Mucosa of descending colon (tissue), 3 donors: ENCODE measurements at regions of chr1 and their contacts with region 1.

Region 1: GRCh38 chr1:226608699-226609505 is 60.3 kb downstream of the STUM start:
- DNase-seq: peak in 2 of 3 donors; percentile 75 to 77
- ATAC-seq: peak; percentile 77
- H3K4me3 ChIP-seq: no peak overlapping the region
- H3K4me1 ChIP-seq: no peaks in the 10 kb centered on the region
- CTCF ChIP-seq: peak; percentile 80

Region 2: GRCh38 chr1:226424228-226425003 is 184.5 kb before region 1 on chr1:
- intact Hi-C with region 1: loop called in 1 of 2 experiments (anchors 10 kb)
- DNase-seq: peak in 1 of 3 donors; percentile 19
- ATAC-seq: peak; percentile 70
- H3K4me3 ChIP-seq: no peak overlapping the region
- H3K4me1 ChIP-seq: no peaks in the 10 kb centered on the region
- CTCF ChIP-seq: no peak

Region 3: DNA sequence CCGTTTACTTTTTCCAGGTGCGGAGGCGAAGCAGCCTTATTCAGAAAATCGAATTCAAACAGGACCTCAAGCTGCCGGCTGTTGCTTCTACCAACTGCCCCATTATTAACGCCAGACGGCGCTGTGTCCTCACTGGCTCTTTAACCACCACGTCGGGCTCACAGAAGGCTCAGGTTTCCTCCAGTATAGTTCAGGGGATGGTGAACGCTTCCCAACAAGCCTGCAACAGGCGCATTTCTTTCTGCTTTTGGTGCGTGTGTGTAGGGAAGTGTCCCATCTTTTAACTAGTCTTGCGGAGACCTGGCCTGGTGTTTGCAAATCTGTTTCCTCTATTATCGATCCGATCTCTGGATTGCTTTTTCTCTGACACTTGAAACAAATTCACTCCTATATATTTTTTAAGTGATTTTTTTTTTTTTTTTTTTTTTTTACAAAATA is 61.1 kb before region 1 on chr1:
- intact Hi-C with region 1: loop called in 1 of 2 experiments (anchors 10 kb)
- DNase-seq: peak; percentile 74 to 90 (median 83)
- ATAC-seq: peak; percentile 73
- H3K4me3 ChIP-seq: no peak overlapping the region
- H3K4me1 ChIP-seq: peaks cover 36% of the 10 kb centered on the region
- CTCF ChIP-seq: peak; percentile 55